CD14-positive monocyte (primary cell): ENCODE measurements at regions of chr10 and their contacts with region 1.

Region 1: DNA sequence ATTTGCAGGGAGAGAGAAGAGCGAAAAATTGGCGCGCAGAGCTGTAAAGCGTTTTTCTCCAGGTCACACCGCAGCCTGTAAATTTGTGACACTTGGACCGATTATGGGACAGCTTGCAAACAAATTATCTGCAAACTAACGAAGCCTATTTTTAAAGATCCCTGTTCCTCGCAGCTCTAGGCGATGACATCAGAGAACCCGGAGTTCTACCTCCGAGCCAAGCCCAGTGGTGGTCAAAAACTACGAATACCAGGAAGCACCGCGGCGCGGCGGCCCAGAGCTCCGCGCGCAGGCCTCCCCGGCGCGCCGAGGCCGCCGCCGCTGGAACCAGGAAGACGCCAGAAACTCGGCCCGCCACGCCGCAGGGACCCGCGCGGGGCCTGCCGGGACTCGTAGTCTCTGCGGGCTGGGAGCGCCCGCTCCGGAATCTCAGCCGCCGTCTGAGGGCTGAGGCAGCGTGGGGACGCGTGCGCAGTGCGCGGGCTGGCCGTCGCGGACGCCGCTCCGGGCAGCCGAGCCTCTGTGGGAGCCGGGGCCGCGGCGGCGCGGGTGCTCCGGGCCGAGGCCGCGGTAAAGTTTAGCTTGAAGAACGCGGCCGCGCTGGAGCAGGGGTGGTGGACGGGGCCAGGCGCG is at the start of gene PLEKHA1:
- DNase-seq: peak; percentile 87 to 93 (median 91)
- H3K4me3 ChIP-seq: peak within 1 kb of the TSS; percentile 25 to 82 (median 65)
- H3K4me3 Mint-ChIP-seq: peak within 1 kb of the TSS; percentile 93 to 95
- H3K27ac ChIP-seq: no peak within 1 kb of the TSS
- H3K27ac Mint-ChIP-seq: peak within 1 kb of the TSS; percentile 43 to 84 (median 56)
- H3K4me1 ChIP-seq: peaks cover 13 to 20% of the 10 kb centered on the region in 2 donors
- H3K4me1 Mint-ChIP-seq: peaks cover 17% of the 10 kb centered on the region
- H3K27me3 ChIP-seq: peaks cover 41 to 70% of the 10 kb centered on the region in 2 donors
- H3K27me3 Mint-ChIP-seq: peaks cover 42 to 64% (median 56%) of the 10 kb centered on the region in 3 donors
- CTCF ChIP-seq: no peak
- polyA plus RNA-seq, gene PLEKHA1: 5.5 to 14.9 (median 12.3) TPM

Region 2: GRCh38 chr10:122232769-122233168 is 141.6 kb before region 1 on chr10:
- intact Hi-C with region 1: no loop called
- DNase-seq: no peak
- H3K4me3 ChIP-seq: no peak overlapping the region
- H3K4me3 Mint-ChIP-seq: no peak overlapping the region
- H3K27ac ChIP-seq: no peak overlapping the region
- H3K27ac Mint-ChIP-seq: no peak overlapping the region
- H3K4me1 ChIP-seq: no peaks in the 10 kb centered on the region
- H3K4me1 Mint-ChIP-seq: no peaks in the 10 kb centered on the region
- H3K27me3 ChIP-seq: no peaks in the 10 kb centered on the region
- H3K27me3 Mint-ChIP-seq: peaks cover 2 to 5% (median 3%) of the 10 kb centered on the region in 3 donors
- CTCF ChIP-seq: no peak

Region 3: DNA sequence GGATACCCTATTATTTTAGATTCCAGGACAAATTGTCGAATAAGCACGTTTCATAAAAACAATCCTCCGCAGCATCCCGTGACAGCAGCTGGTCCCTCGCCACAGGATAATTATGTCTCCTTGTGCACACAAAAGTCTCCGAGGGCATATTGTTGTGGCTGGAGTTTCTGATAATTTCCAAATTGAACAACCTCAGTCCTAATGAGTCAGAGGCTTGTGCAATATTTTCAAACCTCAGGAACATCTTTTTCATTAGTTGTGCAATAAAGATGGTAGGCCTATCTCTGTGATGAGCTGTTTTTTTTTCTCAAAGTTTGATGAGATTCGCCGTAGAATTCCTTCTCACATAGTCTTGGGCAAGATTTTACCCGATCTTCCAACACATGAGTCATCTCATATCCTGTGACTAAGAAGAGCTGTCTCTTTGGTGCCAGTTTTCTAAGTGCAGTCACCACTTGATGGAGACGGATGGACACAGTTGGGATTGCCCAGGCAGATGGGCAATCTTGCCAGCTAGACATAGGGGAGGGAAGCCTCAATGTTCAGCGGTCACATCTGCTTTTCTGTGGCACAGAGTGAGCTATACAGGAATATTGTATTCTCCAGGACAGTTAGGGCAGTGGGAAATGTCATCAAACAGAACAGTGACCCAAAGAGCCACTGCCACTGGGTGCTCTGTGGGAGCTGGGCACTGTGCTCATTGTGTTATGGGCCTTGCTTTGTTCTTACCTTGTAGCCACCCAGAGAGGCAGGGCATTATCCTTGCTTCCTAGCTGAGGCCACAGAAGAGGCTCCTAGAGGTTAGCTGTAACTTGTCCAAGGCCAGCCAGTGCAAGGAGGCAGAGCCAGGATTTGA is 94.8 kb after region 1 on chr10:
- intact Hi-C with region 1: loop called in 1 of 2 experiments (anchors 2 kb)
- DNase-seq: peak; percentile 82 to 94 (median 93)
- H3K4me3 ChIP-seq: peak overlapping the region in 1 of 3 experiments; percentile 25
- H3K4me3 Mint-ChIP-seq: peak overlapping the region in 1 of 2 donors; percentile 68
- H3K27ac ChIP-seq: peak overlapping the region; percentile 42 to 73
- H3K27ac Mint-ChIP-seq: peak overlapping the region; percentile 72 to 91 (median 76)
- H3K4me1 ChIP-seq: peaks cover 49 to 60% of the 10 kb centered on the region in 2 donors
- H3K4me1 Mint-ChIP-seq: peaks cover 70% of the 10 kb centered on the region
- H3K27me3 ChIP-seq: peaks cover 14 to 30% of the 10 kb centered on the region in 2 donors
- H3K27me3 Mint-ChIP-seq: peaks cover 38 to 44% (median 38%) of the 10 kb centered on the region in 3 donors
- CTCF ChIP-seq: no peak